WTC11 (cell line): ENCODE measurements at regions of chr21 and their contacts with region 1.

Region 1: DNA sequence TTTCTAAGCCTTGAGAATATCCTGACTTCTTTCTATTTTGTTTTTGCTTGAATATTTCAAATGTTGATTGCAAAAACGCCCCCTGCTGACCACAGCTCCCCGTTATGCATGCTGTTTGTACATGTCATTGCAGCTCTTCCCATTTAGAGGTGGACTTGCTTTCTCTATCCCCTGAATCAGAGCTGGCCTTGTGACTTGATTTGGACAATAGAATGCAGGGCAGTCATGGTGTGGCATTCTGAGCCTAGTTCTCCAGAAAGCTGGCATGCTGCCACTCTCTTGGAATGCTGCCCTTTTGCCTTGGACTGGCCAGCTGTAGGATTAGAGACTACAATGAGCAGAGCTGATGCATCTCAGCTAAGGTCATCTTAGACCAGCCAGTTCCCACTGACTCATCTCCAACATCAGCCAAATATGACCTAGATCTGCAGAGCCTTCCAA is 1561.5 kb downstream of the MRPL39 start:
- DNase-seq: peak; percentile 9
- ATAC-seq: no peak
- H3K4me3 Mint-ChIP-seq: no peak overlapping the region
- H3K27ac Mint-ChIP-seq: no peak overlapping the region
- H3K4me1 Mint-ChIP-seq: peaks cover 3% of the 10 kb centered on the region
- H3K27me3 Mint-ChIP-seq: no peaks in the 10 kb centered on the region
- CTCF ChIP-seq: no peak

Region 2: GRCh38 chr21:24023402-24023801 is 22.4 kb before region 1 on chr21:
- CTCF ChIA-PET with region 1: interaction called, 10 read pairs
- POLR2A ChIA-PET with region 1: no interaction called
- DNase-seq: no peak
- ATAC-seq: no peak
- H3K4me3 Mint-ChIP-seq: no peak overlapping the region
- H3K27ac Mint-ChIP-seq: no peak overlapping the region
- H3K4me1 Mint-ChIP-seq: no peaks in the 10 kb centered on the region
- H3K27me3 Mint-ChIP-seq: peaks cover 3% of the 10 kb centered on the region; the same call in 1 of the 2 replicates
- CTCF ChIP-seq: no peak